PC-3 (cell line): ENCODE measurements at regions of chr7 and their contacts with region 1.

Region 1: GRCh38 chr7:94923412-94923811 is 16.0 kb downstream of the PPP1R9A start:
- DNase-seq: no peak
- ATAC-seq: no peak
- H3K4me3 ChIP-seq: no peak overlapping the region
- H3K27ac ChIP-seq: no peak overlapping the region
- H3K4me1 ChIP-seq: no peaks in the 10 kb centered on the region
- H3K27me3 ChIP-seq: no peaks in the 10 kb centered on the region
- CTCF ChIP-seq: no peak

Region 2: DNA sequence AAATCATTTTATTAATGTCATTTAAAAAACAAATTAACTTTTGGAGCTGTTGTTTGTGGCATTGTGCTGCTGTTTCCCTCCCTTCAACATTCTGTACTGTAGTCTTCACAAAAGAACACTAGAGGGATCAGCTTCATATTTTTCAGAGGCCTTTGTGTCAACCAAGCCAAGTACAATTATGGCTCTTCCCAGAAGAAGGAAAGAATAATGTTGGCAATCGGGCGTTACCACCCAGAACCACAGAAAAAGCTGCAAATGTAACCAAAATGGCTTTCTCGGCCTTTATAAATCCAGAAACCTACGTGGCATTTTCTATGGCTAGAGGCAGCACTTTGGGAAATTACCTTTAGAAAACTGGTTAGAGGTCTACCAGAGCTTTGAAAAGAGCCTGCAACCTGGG is 627.6 kb before region 1 on chr7:
- CTCF ChIA-PET with region 1: interaction called, 17 read pairs
- POLR2A ChIA-PET with region 1: no interaction called
- intact Hi-C with region 1: no loop called
- DNase-seq: peak; percentile 63
- ATAC-seq: peak; percentile 66
- H3K4me3 ChIP-seq: no peak overlapping the region
- H3K27ac ChIP-seq: no peak overlapping the region
- H3K4me1 ChIP-seq: peaks cover 33% of the 10 kb centered on the region
- H3K27me3 ChIP-seq: no peaks in the 10 kb centered on the region
- CTCF ChIP-seq: peak; percentile 70

Region 3: GRCh38 chr7:95199779-95200558 is 276.6 kb after region 1 on chr7:
- CTCF ChIA-PET with region 1: no interaction called
- POLR2A ChIA-PET with region 1: no interaction called
- intact Hi-C with region 1: no loop called
- DNase-seq: peak; percentile 60
- ATAC-seq: peak; percentile 87
- H3K4me3 ChIP-seq: no peak overlapping the region
- H3K27ac ChIP-seq: no peak overlapping the region
- H3K4me1 ChIP-seq: no peaks in the 10 kb centered on the region
- H3K27me3 ChIP-seq: no peaks in the 10 kb centered on the region
- CTCF ChIP-seq: peak; percentile 81